SK-N-SH (cell line): ENCODE measurements at regions of chr19 and their contacts with region 1.

Region 1: DNA sequence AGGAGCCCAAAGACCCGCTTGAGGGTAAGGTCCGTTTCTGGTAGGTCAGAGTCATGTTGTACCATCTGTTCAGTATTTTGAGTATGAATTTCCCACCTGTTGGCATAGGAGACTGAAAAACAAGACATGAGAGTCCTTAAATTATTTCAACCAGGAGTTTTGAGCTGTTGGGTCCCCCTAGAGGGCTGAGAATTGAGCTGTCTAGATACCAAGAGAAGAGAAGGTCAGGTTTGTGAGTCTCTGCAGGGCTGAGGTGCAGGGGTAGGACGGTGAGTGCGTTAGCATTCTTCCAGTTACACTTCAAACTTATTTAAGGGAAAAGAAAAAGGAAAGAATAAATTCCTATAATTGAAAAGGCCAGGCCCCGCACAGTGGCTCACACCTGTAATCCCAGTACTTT is 5.0 kb downstream of the CBLC start:
- DNase-seq: no peak
- H3K4me3 ChIP-seq: no peak overlapping the region
- H3K27ac ChIP-seq: no peak overlapping the region
- H3K4me1 ChIP-seq: no peaks in the 10 kb centered on the region
- H3K27me3 ChIP-seq: no peaks in the 10 kb centered on the region
- CTCF ChIP-seq: 0 out of 2 replicates have a peak, but pooled peaks have one; percentile 11
- EP300 ChIP-seq: no peak
- RAD21 ChIP-seq: no peak

Region 2: GRCh38 chr19:44552324-44552723 is 230.4 kb before region 1 on chr19:
- CTCF ChIA-PET with region 1: no interaction called
- POLR2A ChIA-PET with region 1: no interaction called
- DNase-seq: peak; percentile 40
- H3K4me3 ChIP-seq: no peak overlapping the region; a peak in 1 of 4 replicates
- H3K27ac ChIP-seq: no peak overlapping the region
- H3K4me1 ChIP-seq: no peaks in the 10 kb centered on the region
- H3K27me3 ChIP-seq: peaks cover 2% of the 10 kb centered on the region; the same call in 1 of the 2 replicates
- CTCF ChIP-seq: peak; percentile 53
- EP300 ChIP-seq: no peak
- RAD21 ChIP-seq: peak; percentile 24; the same call in 1 of the 2 replicates

Region 3: GRCh38 chr19:44677019-44677821 is 105.5 kb before region 1 on chr19:
- CTCF ChIA-PET with region 1: no interaction called
- POLR2A ChIA-PET with region 1: no interaction called
- DNase-seq: peak; percentile 53
- H3K4me3 ChIP-seq: no peak overlapping the region
- H3K27ac ChIP-seq: peak overlapping the region in 1 of 2 experiments; percentile 87; a peak in 2 of 4 replicates
- H3K4me1 ChIP-seq: no peaks in the 10 kb centered on the region
- H3K27me3 ChIP-seq: no peaks in the 10 kb centered on the region
- CTCF ChIP-seq: 0 out of 2 replicates have a peak, but pooled peaks have one; percentile 12
- EP300 ChIP-seq: peak in 1 of 2 experiments; percentile 55; a peak in 1 of 4 replicates
- RAD21 ChIP-seq: no peak

Region 4: GRCh38 chr19:44764975-44765948 is 17.5 kb before region 1 on chr19:
- CTCF ChIA-PET with region 1: interaction called, 74 read pairs
- POLR2A ChIA-PET with region 1: no interaction called
- DNase-seq: no peak
- H3K4me3 ChIP-seq: no peak overlapping the region
- H3K27ac ChIP-seq: no peak overlapping the region
- H3K4me1 ChIP-seq: no peaks in the 10 kb centered on the region
- H3K27me3 ChIP-seq: no peaks in the 10 kb centered on the region
- CTCF ChIP-seq: no peak
- EP300 ChIP-seq: no peak
- RAD21 ChIP-seq: no peak

Region 5: GRCh38 chr19:44800461-44800860 is 17.7 kb after region 1 on chr19:
- CTCF ChIA-PET with region 1: interaction called, 19 read pairs
- POLR2A ChIA-PET with region 1: no interaction called
- DNase-seq: peak; percentile 89
- H3K4me3 ChIP-seq: peak overlapping the region in 1 of 2 experiments; percentile 41; a peak in 1 of 4 replicates
- H3K27ac ChIP-seq: no peak overlapping the region
- H3K4me1 ChIP-seq: no peaks in the 10 kb centered on the region; a peak in 1 of 4 replicates
- H3K27me3 ChIP-seq: peaks cover 34% of the 10 kb centered on the region
- CTCF ChIP-seq: peak; percentile 86
- EP300 ChIP-seq: no peak
- RAD21 ChIP-seq: peak; percentile 75

Region 6: DNA sequence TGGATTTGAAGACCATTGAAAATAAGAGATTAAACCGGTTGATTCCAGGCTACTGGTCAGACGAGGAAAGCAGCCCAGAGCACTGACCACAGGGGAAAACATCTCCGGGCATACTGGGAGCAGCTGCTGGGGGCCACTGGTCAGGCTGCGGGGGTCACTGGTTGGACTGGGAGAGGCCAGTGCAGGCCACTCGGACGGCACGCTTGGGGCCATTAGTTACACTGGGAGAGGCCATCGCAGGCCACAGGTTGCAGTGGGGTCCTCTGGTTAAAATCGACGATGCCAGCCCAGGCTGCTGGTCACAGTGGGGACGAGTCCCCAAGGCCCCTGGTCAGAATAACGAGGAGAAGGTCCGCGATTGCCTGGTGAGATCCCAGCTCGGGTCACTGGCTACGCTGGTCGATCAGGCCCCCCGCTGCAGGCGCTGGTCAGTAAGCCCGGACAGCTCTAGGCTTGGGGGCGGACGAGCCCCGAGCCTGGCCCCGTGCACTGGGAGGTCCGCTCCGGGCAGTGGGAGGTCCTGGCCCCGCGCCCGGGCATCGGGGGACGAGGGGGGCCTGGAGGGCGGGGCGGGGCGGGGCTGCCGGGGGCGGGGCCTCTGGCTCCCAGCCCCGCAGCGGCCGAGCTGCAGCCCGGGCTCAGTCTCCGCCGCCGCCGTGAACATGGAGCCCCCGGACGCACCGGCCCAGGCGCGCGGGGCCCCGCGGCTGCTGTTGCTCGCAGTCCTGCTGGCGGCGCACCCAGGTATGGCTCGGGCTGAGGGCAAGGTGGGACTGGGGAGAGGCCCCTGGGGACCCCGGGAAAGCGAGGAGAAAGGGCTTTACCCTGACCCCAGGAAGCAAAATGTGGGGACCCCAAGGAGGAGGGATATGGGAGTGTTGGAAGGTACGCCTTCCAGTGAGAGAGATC is 26.0 kb after region 1 on chr19 and contains the start of gene BCAM:
- CTCF ChIA-PET with region 1: interaction called, 32 read pairs
- POLR2A ChIA-PET with region 1: no interaction called
- DNase-seq: peak; percentile 97
- H3K4me3 ChIP-seq: peak within 1 kb of the TSS; percentile 51 to 66
- H3K27ac ChIP-seq: no peak within 1 kb of the TSS
- H3K4me1 ChIP-seq: peaks cover 8 to 13% of the 10 kb centered on the region in 2 experiments; a peak in 2 of 4 replicates
- H3K27me3 ChIP-seq: peaks cover 34% of the 10 kb centered on the region
- CTCF ChIP-seq: no peak
- EP300 ChIP-seq: no peak
- RAD21 ChIP-seq: no peak
- polyA plus RNA-seq, gene BCAM: 9.7 and 34.0 TPM in 2 replicates

Region 7: DNA sequence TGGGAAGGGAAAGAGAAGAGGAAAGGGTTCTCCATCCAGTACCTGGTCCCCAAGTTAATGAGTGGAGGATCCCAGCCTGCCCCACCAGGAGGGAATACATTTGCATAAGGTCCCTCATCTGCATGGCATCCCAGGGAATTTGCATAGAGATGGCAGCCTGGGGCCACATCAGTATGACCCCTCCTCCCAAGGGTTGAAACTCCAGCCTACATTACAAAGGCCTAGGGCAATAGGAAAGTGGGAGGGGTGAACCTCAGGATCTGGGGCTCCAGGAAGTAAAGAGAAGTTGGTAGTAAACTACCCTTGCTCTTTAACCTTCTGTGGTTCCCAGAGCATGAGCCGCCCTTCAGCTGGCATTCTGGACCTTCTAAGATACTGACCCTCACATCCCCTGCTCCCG is 56.5 kb after region 1 on chr19:
- CTCF ChIA-PET with region 1: interaction called, 18 read pairs
- POLR2A ChIA-PET with region 1: no interaction called
- DNase-seq: no peak
- H3K4me3 ChIP-seq: no peak overlapping the region
- H3K27ac ChIP-seq: no peak overlapping the region
- H3K4me1 ChIP-seq: no peaks in the 10 kb centered on the region; a peak in 1 of 4 replicates
- H3K27me3 ChIP-seq: peaks cover 34% of the 10 kb centered on the region
- CTCF ChIP-seq: no peak
- EP300 ChIP-seq: no peak
- RAD21 ChIP-seq: no peak

Region 8: GRCh38 chr19:44845612-44846454 is 63.1 kb after region 1 on chr19 and contains the start of gene NECTIN2:
- CTCF ChIA-PET with region 1: interaction called, 18 read pairs
- POLR2A ChIA-PET with region 1: no interaction called
- DNase-seq: peak; percentile 98
- H3K4me3 ChIP-seq: peak within 1 kb of the TSS; percentile 71 to 98
- H3K27ac ChIP-seq: peak within 1 kb of the TSS; percentile 61 to 92
- H3K4me1 ChIP-seq: peaks cover 19 to 21% of the 10 kb centered on the region in 2 experiments; a peak in 3 of 4 replicates
- H3K27me3 ChIP-seq: no peaks in the 10 kb centered on the region
- CTCF ChIP-seq: peak; percentile 93
- EP300 ChIP-seq: no peak
- RAD21 ChIP-seq: peak; percentile 50
- polyA plus RNA-seq, gene NECTIN2: 96.6 and 121 TPM in 2 replicates

Region 9: GRCh38 chr19:44883922-44884321 is 101.2 kb after region 1 on chr19:
- CTCF ChIA-PET with region 1: no interaction called
- POLR2A ChIA-PET with region 1: no interaction called
- DNase-seq: no peak
- H3K4me3 ChIP-seq: no peak overlapping the region
- H3K27ac ChIP-seq: no peak overlapping the region
- H3K4me1 ChIP-seq: no peaks in the 10 kb centered on the region
- H3K27me3 ChIP-seq: no peaks in the 10 kb centered on the region
- CTCF ChIP-seq: no peak
- EP300 ChIP-seq: no peak
- RAD21 ChIP-seq: no peak